ENCODE measurements at regions of chr20 and their contacts with region 1.

Region 1: DNA sequence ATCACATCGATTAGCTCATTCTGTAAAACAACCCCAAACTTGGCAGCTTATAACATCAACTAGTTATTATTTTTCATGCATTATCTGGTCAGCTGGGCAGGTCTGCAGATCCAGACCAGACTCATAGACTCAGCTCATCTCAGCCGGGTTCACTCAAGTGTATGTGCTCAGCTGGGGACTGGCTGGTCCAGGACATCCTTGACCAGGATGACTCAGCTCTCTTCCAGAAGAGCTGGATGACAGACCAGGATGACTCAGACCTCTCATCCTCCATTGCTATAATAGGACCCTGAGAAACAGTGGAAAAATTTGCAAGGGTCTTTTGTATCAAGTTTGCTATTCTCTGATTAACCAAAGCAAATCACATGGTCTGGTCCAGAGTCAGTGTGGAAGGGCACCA is 312.5 kb upstream of the PLCB4 start:
- DNase-seq: peak; percentile 18
- H3K4me3 ChIP-seq: no peak overlapping the region
- H3K27ac ChIP-seq: no peak overlapping the region
- H3K4me1 ChIP-seq: no peaks in the 10 kb centered on the region
- H3K27me3 ChIP-seq: no peaks in the 10 kb centered on the region
- CTCF ChIP-seq: no peak

Region 2: DNA sequence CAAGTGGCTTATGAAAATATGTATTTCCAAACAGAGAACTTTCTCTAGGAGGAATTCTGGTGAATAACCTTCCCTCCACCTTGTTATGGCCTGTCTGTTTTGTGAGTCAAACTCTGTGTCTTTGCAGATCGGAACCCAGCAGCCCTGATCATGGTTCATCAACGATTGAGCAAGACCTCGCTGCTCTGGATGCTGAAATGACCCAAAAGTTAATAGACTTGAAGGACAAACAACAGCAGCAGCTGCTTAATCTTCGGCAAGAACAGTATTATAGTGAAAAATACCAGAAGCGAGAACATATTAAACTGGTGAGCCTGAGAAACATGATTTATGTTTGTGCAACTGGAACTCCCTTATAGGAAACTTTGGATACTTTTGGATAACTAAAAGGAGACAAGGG is 18.0 kb after region 1 on chr20:
- CTCF ChIA-PET with region 1: interaction called, 12 read pairs
- POLR2A ChIA-PET with region 1: no interaction called
- intact Hi-C with region 1: no loop called
- DNase-seq: no peak
- H3K4me3 ChIP-seq: no peak overlapping the region
- H3K27ac ChIP-seq: no peak overlapping the region
- H3K4me1 ChIP-seq: no peaks in the 10 kb centered on the region
- H3K27me3 ChIP-seq: no peaks in the 10 kb centered on the region
- CTCF ChIP-seq: no peak

Region 3: GRCh38 chr20:8812817-8813216 is 56.4 kb after region 1 on chr20:
- CTCF ChIA-PET with region 1: interaction called, 10 read pairs
- POLR2A ChIA-PET with region 1: no interaction called
- intact Hi-C with region 1: no loop called
- DNase-seq: peak; percentile 92
- H3K4me3 ChIP-seq: no peak overlapping the region
- H3K27ac ChIP-seq: no peak overlapping the region
- H3K4me1 ChIP-seq: peaks cover 17% of the 10 kb centered on the region
- H3K27me3 ChIP-seq: no peaks in the 10 kb centered on the region
- CTCF ChIP-seq: peak; percentile 18; the same call in 1 of the 2 replicates

Region 4: DNA sequence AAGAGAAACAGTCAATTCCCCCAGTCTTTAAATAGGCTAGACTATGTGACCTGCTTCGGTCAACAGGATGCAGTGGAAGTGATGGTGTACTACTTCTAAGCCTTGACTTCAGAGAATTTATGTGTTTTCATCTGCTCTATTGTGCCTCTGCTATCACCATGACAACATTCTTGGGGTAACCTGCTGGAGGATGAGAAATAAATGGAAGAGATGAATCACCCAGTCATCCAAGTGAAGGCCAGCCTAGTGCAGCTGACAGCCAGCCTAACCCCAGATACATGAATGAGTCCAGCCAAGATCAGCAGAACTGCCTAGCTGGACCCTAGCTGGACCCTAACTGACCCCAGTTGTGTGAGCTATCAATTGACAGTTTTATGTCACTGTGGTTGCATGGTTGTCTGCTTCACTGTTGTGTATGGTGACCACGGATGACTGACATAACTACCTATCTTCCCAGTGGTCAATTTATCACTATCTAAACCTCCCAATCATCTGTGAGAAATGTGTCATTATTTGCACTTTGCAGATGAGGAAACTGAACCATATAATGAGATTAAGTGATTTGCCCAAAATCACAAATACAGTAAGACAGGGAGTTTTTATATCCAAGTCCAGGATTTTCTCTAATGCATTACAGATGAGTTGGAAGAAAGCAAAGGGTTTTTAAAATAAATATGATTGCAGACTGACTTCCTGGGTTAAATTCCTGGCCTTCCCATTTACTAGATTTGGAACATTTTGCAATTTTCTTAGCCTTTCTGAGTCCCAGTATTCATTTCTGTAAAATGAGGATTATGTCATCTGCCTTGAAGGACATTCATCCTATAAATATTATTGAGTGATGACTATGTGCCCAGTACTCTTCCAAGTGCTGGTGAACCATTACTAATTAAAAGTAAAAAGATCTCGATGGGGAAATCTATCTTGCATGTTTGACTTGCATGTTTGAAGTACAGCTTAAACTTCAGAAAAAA is 176.1 kb after region 1 on chr20:
- CTCF ChIA-PET with region 1: no interaction called
- POLR2A ChIA-PET with region 1: no interaction called
- intact Hi-C with region 1: no loop called
- DNase-seq: peak; percentile 2
- H3K4me3 ChIP-seq: no peak overlapping the region
- H3K27ac ChIP-seq: no peak overlapping the region
- H3K4me1 ChIP-seq: peaks cover 15% of the 10 kb centered on the region
- H3K27me3 ChIP-seq: no peaks in the 10 kb centered on the region
- CTCF ChIP-seq: no peak

Region 5: DNA sequence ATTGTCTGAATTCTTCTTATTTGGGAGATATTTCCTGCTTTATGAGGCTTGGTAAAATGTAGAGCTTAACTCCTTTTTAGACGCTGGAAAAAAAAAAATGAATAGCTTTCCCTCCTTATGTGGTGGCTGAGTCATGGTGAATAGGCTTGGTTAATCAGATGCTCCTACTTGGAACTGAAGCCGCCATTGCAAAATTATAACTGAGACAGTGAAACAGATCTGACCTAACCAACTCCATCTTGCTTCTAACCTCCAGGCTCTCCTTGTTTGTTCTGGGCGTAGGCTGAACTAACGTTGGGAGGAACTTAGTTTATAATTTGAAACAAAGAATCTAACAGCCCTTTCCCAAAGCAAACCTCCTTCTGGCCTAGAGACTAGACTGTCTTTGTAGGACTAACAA is 269.2 kb after region 1 on chr20:
- CTCF ChIA-PET with region 1: interaction called, 14 read pairs
- POLR2A ChIA-PET with region 1: no interaction called
- intact Hi-C with region 1: no loop called
- DNase-seq: no peak
- H3K4me3 ChIP-seq: no peak overlapping the region
- H3K27ac ChIP-seq: no peak overlapping the region
- H3K4me1 ChIP-seq: peaks cover 16% of the 10 kb centered on the region
- H3K27me3 ChIP-seq: no peaks in the 10 kb centered on the region
- CTCF ChIP-seq: no peak

Region 6: DNA sequence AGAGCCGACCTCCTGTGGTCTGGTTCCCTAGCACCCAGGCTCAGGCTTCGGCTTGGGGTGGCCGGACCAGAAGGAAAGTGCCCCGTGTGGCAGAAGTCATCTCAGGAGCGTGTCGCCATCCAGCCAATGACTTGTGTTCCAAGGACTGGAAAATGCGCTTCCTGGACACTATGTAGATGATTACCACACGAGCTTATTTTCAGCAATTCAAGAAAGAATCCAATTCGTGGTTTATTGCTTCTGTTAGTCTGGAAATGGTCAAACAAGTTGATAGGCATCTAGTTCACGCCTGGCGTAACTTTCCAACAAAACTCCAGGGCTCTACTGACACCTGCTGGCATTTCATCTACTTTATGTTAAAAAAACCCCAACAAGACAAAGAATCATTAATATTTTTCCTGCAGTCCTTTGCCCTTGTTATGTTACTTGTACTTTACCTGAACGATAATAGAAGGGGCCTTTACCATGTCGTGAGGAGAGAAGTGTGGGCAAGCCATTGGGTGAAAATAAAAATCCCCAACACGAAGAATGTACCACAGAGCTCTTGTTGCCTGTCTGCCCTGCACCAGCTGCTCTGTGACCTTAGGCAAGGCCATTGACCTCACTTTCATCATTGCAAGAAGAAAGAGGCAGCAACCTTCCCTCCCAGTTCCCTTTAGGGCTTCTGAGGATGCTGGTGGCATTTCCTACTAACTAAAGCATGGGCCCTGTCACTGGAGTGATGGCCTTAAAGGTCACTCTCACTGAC is 603.3 kb after region 1 on chr20:
- CTCF ChIA-PET with region 1: no interaction called
- POLR2A ChIA-PET with region 1: no interaction called
- intact Hi-C with region 1: loop called (anchors 2 kb)
- DNase-seq: peak; percentile 66
- H3K4me3 ChIP-seq: no peak overlapping the region
- H3K27ac ChIP-seq: no peak overlapping the region
- H3K4me1 ChIP-seq: no peaks in the 10 kb centered on the region
- H3K27me3 ChIP-seq: no peaks in the 10 kb centered on the region
- CTCF ChIP-seq: peak; percentile 58

Region 7: GRCh38 chr20:9392892-9393857 is 636.8 kb after region 1 on chr20:
- CTCF ChIA-PET with region 1: interaction called, 14 read pairs
- POLR2A ChIA-PET with region 1: no interaction called
- intact Hi-C with region 1: loop called (anchors 2 kb)
- DNase-seq: peak; percentile 81
- H3K4me3 ChIP-seq: no peak overlapping the region
- H3K27ac ChIP-seq: no peak overlapping the region
- H3K4me1 ChIP-seq: no peaks in the 10 kb centered on the region
- H3K27me3 ChIP-seq: no peaks in the 10 kb centered on the region
- CTCF ChIP-seq: peak; percentile 79

Region 8: GRCh38 chr20:9609887-9610502 is 853.6 kb after region 1 on chr20:
- CTCF ChIA-PET with region 1: interaction called, 3 read pairs
- POLR2A ChIA-PET with region 1: no interaction called
- intact Hi-C with region 1: loop called (anchors 5 kb)
- DNase-seq: peak; percentile 79
- H3K4me3 ChIP-seq: no peak overlapping the region
- H3K27ac ChIP-seq: no peak overlapping the region
- H3K4me1 ChIP-seq: no peaks in the 10 kb centered on the region
- H3K27me3 ChIP-seq: no peaks in the 10 kb centered on the region
- CTCF ChIP-seq: peak; percentile 77

Measured in A673 (cell line).